ENCODE measurements at regions of chr20 and their contacts with region 1.

Region 1: DNA sequence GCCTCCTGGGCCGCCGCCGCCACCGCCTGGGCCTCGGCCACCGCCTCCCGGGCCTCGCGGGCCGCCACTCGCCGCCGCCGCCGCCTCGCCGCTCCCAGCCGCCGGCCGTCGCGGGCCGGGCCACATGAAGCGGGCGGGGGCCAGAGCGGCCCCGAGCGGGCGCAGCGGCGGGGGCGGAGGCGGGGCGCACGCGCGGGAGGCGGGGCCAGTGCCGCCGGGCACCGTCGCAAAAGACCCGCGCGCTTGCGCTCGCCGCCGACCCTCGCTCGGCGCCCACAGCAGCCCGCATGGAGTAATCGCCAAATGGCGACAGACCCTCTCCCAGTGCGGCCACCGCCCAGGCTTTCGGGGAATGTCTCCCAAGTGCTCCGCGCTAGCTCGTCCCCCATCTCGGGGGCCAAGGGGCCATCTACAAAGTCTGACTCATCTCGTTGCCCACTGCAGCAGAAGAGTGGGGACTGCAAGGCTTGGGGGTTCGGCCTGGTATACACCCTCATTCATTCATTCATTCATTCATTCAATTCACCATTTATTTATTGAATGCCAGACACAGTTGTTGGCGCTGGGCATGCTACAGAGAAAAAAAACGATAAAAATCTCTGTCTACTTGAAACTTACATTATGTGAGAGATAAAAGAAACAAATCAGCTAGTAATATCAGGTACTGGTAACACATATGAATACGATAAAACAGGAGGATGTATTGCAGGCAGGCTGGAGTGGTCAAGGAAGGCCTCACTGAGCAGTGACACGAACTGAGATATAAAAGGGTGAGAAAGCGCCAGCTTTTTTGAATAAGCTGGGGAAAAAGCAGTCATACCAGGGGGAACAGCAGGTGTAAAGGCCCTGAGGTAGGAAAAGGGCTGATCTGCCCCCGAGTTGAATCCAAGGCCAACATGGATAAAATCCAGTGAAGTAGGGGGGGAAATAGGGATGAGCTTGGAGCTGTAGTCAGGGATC is at the start of gene B4GALT5:
- DNase-seq: peak; percentile 92
- total RNA-seq, gene B4GALT5: 26.1 to 35.2 TPM

Region 2: GRCh38 chr20:49661560-49662329 is 52.3 kb before region 1 on chr20:
- intact Hi-C with region 1: loop called in 1 of 2 experiments (anchors 2 kb)
- DNase-seq: no peak

Region 3: GRCh38 chr20:49690899-49691620 is 23.0 kb before region 1 on chr20:
- intact Hi-C with region 1: no loop called
- DNase-seq: no peak

Measured in posterior vena cava (tissue), 2 donors.